GM12878 (cell line): ENCODE measurements at regions of chr15 and their contacts with region 1.

Region 1: DNA sequence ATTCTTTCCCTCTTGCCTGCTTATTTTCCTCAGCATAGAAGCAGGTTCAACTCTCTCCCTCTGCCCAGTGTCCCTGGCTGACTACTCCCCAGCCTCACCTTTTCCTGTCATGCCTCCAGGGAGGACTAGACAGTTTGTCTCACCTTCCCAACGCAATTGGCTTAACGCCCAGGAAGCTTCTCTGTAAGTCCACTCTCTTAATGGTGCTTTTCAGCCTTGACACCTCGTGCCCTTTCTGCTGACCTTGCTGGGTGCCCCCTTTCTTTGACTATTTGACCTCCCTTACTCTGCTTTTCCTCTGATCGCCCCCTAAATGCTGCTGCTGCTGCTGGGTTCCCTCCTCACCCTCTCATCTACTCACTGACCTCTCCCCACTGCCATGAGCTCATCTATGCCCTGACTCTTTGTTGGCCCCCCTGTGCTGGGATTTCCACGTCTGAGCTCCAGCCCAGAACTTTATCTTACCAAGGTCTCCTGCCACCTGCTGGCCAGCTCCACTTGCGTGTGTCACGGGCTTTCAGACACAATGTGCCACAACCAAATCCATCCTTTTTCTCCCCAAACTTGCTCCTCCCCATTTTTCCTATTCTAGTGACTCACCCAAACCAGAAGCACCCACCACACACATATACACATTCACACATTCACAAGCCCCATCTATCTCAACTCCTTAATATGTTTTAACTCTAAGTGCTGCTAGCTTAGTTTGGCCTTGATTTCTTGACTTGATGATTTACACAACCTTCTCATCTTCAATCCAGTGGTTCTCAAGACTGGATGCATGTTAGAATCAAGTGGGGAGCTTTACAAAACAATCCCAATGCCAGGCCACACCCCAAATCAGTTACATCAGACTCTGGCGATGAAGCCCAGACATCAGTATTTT is 16.6 kb downstream of the EPB42 start:
- DNase-seq: no peak
- ATAC-seq: peak; percentile 93
- H3K4me3 ChIP-seq: no peak overlapping the region
- H3K27ac ChIP-seq: no peak overlapping the region
- H3K4me1 ChIP-seq: no peaks in the 10 kb centered on the region
- H3K27me3 ChIP-seq: peaks cover 0 to 3% of the 10 kb centered on the region in 2 experiments; a peak in 3 of 4 replicates
- CTCF ChIP-seq: peak; percentile 68 to 73 (median 69)
- EP300 ChIP-seq: no peak
- POLR2A ChIP-seq: no peak
- RAD21 ChIP-seq: peak; percentile 45

Region 2: DNA sequence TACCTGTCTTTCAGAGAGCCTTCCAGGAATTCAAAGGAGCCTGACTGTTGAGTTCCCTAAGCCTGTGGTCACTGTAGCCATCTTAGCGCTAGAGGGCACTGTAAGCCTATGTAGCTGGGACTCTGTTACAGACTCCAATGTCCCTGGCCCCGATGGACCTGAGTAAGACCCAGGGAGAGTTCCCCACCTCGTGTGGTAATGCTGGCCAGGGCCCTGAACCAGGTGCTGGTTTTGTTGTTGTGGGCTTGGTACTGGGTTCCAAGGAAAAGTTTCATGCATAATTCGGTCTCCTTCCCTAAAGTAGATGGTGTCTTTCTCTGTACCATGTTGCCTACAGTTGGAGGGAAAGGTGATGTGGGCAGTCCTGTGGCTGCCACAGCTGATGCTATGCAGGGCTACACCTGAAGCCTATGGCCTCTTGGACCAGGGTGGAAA is 499.8 kb before region 1 on chr15:
- CTCF ChIA-PET with region 1: interaction called, 10 read pairs
- POLR2A ChIA-PET with region 1: no interaction called
- RAD21 ChIA-PET with region 1: no interaction called
- SMC1A ChIA-PET with region 1: interaction called, 4 read pairs
- in situ Hi-C with region 1: no loop called
- intact Hi-C with region 1: loop called (anchors 2 kb)
- DNase-seq: peak; percentile 24
- ATAC-seq: peak; percentile 100
- H3K4me3 ChIP-seq: no peak overlapping the region
- H3K27ac ChIP-seq: no peak overlapping the region
- H3K4me1 ChIP-seq: no peaks in the 10 kb centered on the region
- H3K27me3 ChIP-seq: no peaks in the 10 kb centered on the region
- CTCF ChIP-seq: peak; percentile 87 to 89 (median 89)
- EP300 ChIP-seq: no peak
- POLR2A ChIP-seq: no peak
- RAD21 ChIP-seq: peak; percentile 95

Region 3: GRCh38 chr15:43185157-43186017 is 18.9 kb before region 1 on chr15 and contains the start of gene CCNDBP1:
- CTCF ChIA-PET with region 1: interaction called, 70 read pairs
- POLR2A ChIA-PET with region 1: no interaction called
- RAD21 ChIA-PET with region 1: interaction called, 15 read pairs
- SMC1A ChIA-PET with region 1: interaction called, 7 read pairs
- in situ Hi-C with region 1: no loop called
- intact Hi-C with region 1: loop called (anchors 1 kb)
- DNase-seq: peak; percentile 87
- ATAC-seq: peak; percentile 98
- H3K4me3 ChIP-seq: peak within 1 kb of the TSS; percentile 100
- H3K27ac ChIP-seq: peak within 1 kb of the TSS; percentile 80
- H3K4me1 ChIP-seq: no peaks in the 10 kb centered on the region
- H3K27me3 ChIP-seq: no peaks in the 10 kb centered on the region
- CTCF ChIP-seq: peak; percentile 28 to 32 (median 28); a peak in 5 of 6 replicates
- EP300 ChIP-seq: no peak
- POLR2A ChIP-seq: peak; percentile 98
- RAD21 ChIP-seq: no peak
- polyA plus RNA-seq, gene CCNDBP1: 30.1 to 39.2 TPM

Region 4: GRCh38 chr15:43215961-43216360 is 11.7 kb after region 1 on chr15:
- CTCF ChIA-PET with region 1: interaction called, 12 read pairs
- POLR2A ChIA-PET with region 1: no interaction called
- RAD21 ChIA-PET with region 1: no interaction called
- SMC1A ChIA-PET with region 1: interaction called, 7 read pairs
- in situ Hi-C with region 1: no loop called
- intact Hi-C with region 1: no loop called
- DNase-seq: no peak
- ATAC-seq: no peak
- H3K4me3 ChIP-seq: no peak overlapping the region
- H3K27ac ChIP-seq: no peak overlapping the region
- H3K4me1 ChIP-seq: no peaks in the 10 kb centered on the region
- H3K27me3 ChIP-seq: no peaks in the 10 kb centered on the region
- CTCF ChIP-seq: no peak
- EP300 ChIP-seq: no peak
- POLR2A ChIP-seq: no peak
- RAD21 ChIP-seq: no peak

Region 5: DNA sequence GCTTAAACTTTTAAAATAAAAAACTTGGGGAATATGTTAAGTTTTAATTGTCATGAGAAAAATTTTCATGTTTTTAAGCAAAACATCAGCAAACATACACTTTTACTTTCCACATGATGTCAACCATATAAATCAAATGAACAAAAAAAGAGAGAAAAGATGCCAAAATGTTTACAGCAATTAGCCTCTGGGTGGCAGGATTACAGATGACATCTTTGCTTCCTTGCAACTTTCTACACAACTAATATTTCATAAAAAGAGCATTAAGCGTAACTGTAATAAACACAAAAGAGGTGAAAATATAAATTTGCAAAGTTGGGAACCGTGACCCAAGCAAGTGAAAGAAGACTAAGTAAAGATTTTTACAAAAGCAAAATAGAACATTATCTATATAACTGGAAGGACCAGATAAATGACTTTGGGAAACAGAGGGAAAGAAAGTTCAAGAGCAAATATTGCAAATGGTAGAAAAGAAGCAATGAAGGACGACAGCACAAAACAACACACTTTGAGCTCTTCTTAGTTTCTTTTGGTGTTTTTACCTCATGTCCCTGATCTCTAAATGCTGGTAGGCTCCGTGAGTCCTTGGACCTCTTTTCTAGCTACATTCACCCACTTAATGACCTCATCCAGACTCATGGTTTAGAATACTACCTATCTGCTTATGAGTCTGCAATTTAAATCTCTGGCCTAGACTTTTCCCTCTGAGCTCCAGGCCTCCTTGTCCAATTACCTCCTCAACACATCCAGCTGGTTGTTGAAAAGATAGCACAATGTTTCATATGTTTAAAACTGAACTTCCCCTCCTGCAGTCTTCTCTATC is 279.3 kb after region 1 on chr15:
- CTCF ChIA-PET with region 1: no interaction called
- POLR2A ChIA-PET with region 1: no interaction called
- RAD21 ChIA-PET with region 1: no interaction called
- SMC1A ChIA-PET with region 1: no interaction called
- in situ Hi-C with region 1: no loop called
- intact Hi-C with region 1: no loop called
- DNase-seq: no peak
- ATAC-seq: no peak; the same call in 2 of the 3 replicates
- H3K4me3 ChIP-seq: no peak overlapping the region
- H3K27ac ChIP-seq: no peak overlapping the region
- H3K4me1 ChIP-seq: no peaks in the 10 kb centered on the region
- H3K27me3 ChIP-seq: no peaks in the 10 kb centered on the region
- CTCF ChIP-seq: peak; percentile 12 to 36 (median 35); a peak in 4 of 6 replicates
- EP300 ChIP-seq: no peak
- POLR2A ChIP-seq: no peak
- RAD21 ChIP-seq: 0 out of 2 replicates have a peak, but pooled peaks have one; percentile 24